PC-9 (cell line): ENCODE measurements at regions of chr4 and their contacts with region 1.

Region 1: GRCh38 chr4:53804719-53805118 is 213.4 kb upstream of the LNX1 start:
- DNase-seq: peak in 1 of 2 experiments; percentile 10
- H3K4me3 ChIP-seq: no peak overlapping the region
- H3K27ac ChIP-seq: no peak overlapping the region
- H3K4me1 ChIP-seq: no peaks in the 10 kb centered on the region
- H3K27me3 ChIP-seq: no peaks in the 10 kb centered on the region
- CTCF ChIP-seq: peak; percentile 59

Region 2: DNA sequence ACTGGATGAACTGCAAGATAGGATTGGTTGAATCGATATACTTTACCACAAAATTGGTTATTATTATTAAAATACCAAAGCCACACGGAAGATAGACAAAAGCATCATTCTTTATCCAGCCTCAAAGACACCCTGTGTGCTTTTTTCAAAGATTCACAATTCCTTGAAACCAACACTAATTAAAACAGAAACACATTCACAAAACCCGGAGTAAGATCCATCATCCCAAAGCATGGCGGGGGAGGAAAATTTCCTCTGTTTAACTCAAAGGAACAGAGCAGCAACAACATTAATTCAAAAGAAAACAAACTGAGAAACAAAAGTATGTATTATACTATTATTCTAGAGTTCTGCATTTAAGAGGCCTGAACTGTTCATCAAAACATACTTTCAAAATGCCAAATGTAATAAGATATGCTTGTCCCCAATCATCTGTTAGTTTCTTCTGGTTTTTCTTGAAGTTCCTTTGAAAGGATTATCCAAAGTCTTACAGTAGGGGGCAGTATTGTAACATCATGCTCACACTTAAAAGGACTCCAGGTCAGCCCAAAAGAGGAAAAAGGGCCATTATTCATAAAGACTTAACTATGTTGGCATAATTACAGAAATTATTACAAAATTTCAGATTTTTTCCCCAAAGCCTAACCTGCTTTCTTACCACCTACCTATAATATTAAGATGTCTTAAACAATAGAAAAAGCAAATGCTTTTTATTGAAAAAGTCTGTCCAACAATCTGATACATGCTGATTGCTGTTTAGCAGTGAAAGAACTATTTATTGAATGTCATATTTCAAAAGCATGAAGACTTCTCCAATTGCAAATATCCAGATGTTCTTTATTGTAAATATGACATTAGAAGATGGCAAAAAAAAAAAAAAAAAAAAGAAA is 607.6 kb before region 1 on chr4:
- CTCF ChIA-PET with region 1: no interaction called
- POLR2A ChIA-PET with region 1: no interaction called
- intact Hi-C with region 1: loop called (anchors 1 kb)
- DNase-seq: no peak
- H3K4me3 ChIP-seq: no peak overlapping the region
- H3K27ac ChIP-seq: no peak overlapping the region
- H3K4me1 ChIP-seq: no peaks in the 10 kb centered on the region
- H3K27me3 ChIP-seq: no peaks in the 10 kb centered on the region
- CTCF ChIP-seq: peak; percentile 88

Region 3: DNA sequence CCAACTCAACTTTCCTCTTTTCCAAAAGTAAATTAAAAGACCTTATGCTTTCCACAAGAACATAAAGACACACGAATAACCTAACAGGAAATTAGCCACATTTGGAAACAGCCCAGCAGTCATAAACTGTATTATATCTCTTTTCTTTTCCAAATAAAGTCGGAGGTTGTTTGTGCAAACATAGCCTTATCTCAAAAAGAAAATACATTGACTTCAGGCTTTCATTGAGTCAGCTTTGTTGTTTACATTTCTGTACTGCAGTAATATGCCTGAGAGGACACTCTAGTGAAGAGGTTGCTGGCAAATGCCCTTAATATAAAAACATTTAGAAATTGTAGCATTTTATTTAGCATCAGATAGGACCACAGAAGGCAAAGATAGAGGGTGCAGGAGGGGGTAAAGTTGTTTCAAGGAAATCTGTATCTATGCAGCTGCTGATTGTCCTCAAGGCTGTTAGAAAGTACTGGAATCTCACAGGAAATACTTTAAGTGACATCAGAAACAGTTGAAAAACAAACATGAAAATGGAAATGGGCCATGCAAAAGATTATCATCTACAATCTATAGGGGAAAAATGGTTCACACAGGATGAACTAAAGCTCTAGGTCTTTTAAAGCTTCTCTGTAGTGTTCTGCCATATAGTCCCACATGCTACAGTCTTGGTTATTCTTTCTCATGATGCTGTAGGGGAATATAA is 227.9 kb before region 1 on chr4:
- CTCF ChIA-PET with region 1: no interaction called
- POLR2A ChIA-PET with region 1: no interaction called
- intact Hi-C with region 1: no loop called
- DNase-seq: peak in 1 of 2 experiments; percentile 46
- H3K4me3 ChIP-seq: no peak overlapping the region
- H3K27ac ChIP-seq: no peak overlapping the region
- H3K4me1 ChIP-seq: peaks cover 10% of the 10 kb centered on the region; the same call in 1 of the 2 replicates
- H3K27me3 ChIP-seq: no peaks in the 10 kb centered on the region
- CTCF ChIP-seq: no peak